CD4-positive, alpha-beta memory T cell (primary cell): ENCODE measurements at regions of chr1 and their contacts with region 1.

Region 1: DNA sequence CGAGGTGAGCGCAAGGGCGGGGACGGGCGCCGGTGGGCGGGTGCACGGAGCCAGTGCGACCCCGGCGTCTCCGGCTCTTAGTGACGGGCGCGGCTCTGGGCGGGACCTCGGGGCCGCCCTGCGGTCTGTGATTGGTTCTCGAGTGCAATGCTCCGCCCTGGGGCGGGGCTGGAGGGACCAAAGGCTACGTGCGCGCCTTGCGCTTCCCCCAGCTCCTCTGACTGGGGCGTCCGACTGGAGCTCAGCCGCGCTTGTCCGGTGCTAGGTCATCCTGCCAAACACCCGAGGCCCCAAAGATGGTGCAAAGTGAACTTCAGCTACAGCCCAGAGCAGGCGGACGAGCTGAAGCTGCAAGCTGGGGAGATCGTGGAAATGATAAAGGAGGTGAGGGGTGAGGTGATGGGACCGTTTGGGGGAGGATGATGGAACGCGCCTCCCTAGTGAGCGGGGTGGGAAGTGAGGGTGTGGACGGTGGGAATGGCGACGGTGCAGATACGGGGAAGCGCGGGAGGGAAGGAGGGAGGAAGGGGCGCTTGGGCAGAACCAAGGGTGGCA is 811 bp downstream of the SH3D21 start:
- DNase-seq: peak; percentile 90 to 94 (median 92)
- H3K4me3 ChIP-seq: peak overlapping the region; percentile 77 to 81
- H3K4me3 Mint-ChIP-seq: peak overlapping the region; percentile 91 to 99 (median 94)
- H3K27ac ChIP-seq: peak overlapping the region; percentile 73
- H3K27ac Mint-ChIP-seq: peak overlapping the region; percentile 74 to 96 (median 92)
- H3K4me1 ChIP-seq: peaks cover 23% of the 10 kb centered on the region
- H3K4me1 Mint-ChIP-seq: peaks cover 5 to 21% (median 11%) of the 10 kb centered on the region in 4 donors
- H3K27me3 ChIP-seq: no peaks in the 10 kb centered on the region
- H3K27me3 Mint-ChIP-seq: no peaks in the 10 kb centered on the region

Region 2: GRCh38 chr1:36248250-36248894 is 58.6 kb before region 1 on chr1:
- CTCF ChIA-PET with region 1: no interaction called
- POLR2A ChIA-PET with region 1: no interaction called
- intact Hi-C with region 1: no loop called
- DNase-seq: no peak
- H3K4me3 ChIP-seq: no peak overlapping the region
- H3K4me3 Mint-ChIP-seq: peak overlapping the region in 2 of 8 donors; percentile 4 to 43
- H3K27ac ChIP-seq: no peak overlapping the region
- H3K27ac Mint-ChIP-seq: peak overlapping the region in 4 of 7 donors; percentile 27 to 52 (median 34)
- H3K4me1 ChIP-seq: peaks cover 55% of the 10 kb centered on the region
- H3K4me1 Mint-ChIP-seq: peaks cover 39 to 67% (median 54%) of the 10 kb centered on the region in 4 donors
- H3K27me3 ChIP-seq: no peaks in the 10 kb centered on the region
- H3K27me3 Mint-ChIP-seq: no peaks in the 10 kb centered on the region

Region 3: GRCh38 chr1:36323597-36324352 is 16.8 kb after region 1 on chr1 and contains the start of gene EVA1B:
- CTCF ChIA-PET with region 1: interaction called, 5 read pairs
- POLR2A ChIA-PET with region 1: interaction called, 40 read pairs
- intact Hi-C with region 1: loop called (anchors 2 kb)
- DNase-seq: peak; percentile 26 to 54 (median 31)
- H3K4me3 ChIP-seq: peak within 1 kb of the TSS; percentile 47 to 73
- H3K4me3 Mint-ChIP-seq: peak within 1 kb of the TSS; percentile 80 to 84 (median 83)
- H3K27ac ChIP-seq: peak within 1 kb of the TSS; percentile 35
- H3K27ac Mint-ChIP-seq: peak within 1 kb of the TSS in 6 of 7 donors; percentile 63 to 84 (median 76)
- H3K4me1 ChIP-seq: peaks cover 28% of the 10 kb centered on the region
- H3K4me1 Mint-ChIP-seq: peaks cover 18 to 28% (median 24%) of the 10 kb centered on the region in 4 donors
- H3K27me3 ChIP-seq: no peaks in the 10 kb centered on the region
- H3K27me3 Mint-ChIP-seq: no peaks in the 10 kb centered on the region
- total RNA-seq, gene EVA1B: 6.3 to 7.3 TPM